Activated CD4-positive, alpha-beta T cell treated with anti-CD3 and anti-CD28 coated beads for 36 hours (primary cell): ENCODE measurements at regions of chr2 and their contacts with region 1.

Region 1: GRCh38 chr2:99489761-99490622 is at the start of gene REV1:
- DNase-seq: peak; percentile 97
- ATAC-seq: peak; percentile 89
- H3K4me3 Mint-ChIP-seq: peak within 1 kb of the TSS; percentile 89
- H3K27ac Mint-ChIP-seq: peak within 1 kb of the TSS; percentile 99
- H3K4me1 Mint-ChIP-seq: peaks cover 33% of the 10 kb centered on the region
- H3K27me3 Mint-ChIP-seq: no peaks in the 10 kb centered on the region
- total RNA-seq, gene REV1: 30.0 to 38.2 TPM

Region 2: DNA sequence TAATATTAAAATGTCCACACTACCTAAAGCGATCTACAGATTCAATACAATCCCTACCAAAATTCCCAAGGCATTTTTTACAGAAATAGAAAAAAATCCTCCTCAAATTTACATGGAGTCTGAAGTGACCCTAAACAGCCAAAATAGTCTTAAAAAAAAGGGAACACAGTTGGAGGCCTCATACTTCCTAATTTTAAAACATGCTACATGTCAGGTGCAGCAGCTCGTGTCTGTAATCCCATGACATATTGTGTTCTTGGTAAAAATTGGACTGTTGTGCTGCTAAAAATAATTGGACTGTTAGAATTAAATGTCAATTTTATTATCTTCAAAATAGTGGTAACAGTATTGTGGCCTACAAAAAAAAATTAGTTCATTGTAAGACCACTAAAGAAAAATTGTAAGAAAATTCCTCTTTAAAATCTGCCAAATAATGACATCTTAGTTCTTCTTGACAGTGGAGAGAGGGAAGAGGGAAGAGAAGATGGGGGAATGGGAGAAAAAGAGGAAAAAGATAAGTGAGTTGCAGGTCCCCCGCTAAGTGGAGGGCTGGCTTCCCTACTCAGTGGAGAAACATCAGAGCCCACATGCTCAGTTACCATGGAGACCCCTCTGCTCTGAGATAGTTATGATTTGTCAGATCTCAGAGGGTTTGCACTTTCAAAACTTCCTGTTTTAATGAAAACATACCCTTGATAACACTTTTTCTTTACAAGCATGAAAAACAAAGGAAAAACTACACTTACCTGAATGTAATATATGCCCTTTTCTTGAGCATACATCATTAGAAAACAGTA is 835.1 kb before region 1 on chr2:
- CTCF ChIA-PET with region 1: no interaction called
- POLR2A ChIA-PET with region 1: no interaction called
- intact Hi-C with region 1: loop called in 1 of 2 experiments (anchors 10 kb)
- DNase-seq: peak; percentile 48
- ATAC-seq: peak; percentile 38
- H3K4me3 Mint-ChIP-seq: peak overlapping the region; percentile 42
- H3K27ac Mint-ChIP-seq: peak overlapping the region; percentile 72
- H3K4me1 Mint-ChIP-seq: peaks cover 80% of the 10 kb centered on the region
- H3K27me3 Mint-ChIP-seq: no peaks in the 10 kb centered on the region

Region 3: DNA sequence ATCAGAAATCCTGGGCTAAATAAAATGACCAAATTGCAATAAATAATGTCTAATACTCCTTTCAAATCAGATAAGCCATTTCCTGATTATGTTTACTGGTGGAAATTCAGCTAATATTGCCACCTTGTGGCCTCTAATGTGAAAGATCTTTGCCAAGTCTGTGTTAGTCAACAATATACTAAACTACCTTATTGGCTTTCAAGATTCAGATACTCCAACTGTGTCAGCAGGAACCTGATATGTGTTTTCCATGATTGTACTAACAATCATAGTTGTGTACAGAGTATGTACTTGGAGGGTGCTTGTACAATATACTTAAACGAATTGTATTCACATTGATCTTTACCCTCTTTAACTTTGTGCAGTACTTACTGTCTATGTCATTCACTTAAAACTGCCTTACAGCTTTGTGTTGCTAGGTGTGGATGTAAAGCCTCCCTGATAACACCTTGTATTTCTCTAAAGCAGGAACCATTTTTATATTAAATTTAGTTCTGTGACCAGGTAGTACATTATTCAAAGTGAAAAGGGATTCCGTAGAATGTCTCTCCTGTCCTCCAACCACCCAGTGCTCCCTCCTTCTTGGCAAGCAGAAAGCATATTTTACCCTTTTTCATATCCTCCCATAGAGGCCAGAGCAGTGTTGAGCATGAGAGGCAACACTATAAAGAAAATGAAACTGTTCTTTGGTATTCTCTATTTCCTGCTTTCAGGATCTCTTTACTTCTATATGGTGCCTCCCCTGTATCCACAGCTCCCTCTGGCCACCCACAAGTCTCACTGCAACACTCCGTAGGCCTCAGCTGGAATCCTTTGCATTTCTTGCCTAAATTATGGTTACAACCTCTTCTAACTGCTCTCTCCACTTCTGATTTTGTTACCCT is 423.7 kb before region 1 on chr2:
- CTCF ChIA-PET with region 1: no interaction called
- POLR2A ChIA-PET with region 1: no interaction called
- intact Hi-C with region 1: loop called in 1 of 2 experiments (anchors 5 kb)
- DNase-seq: peak; percentile 46
- ATAC-seq: peak; percentile 98
- H3K4me3 Mint-ChIP-seq: no peak overlapping the region
- H3K27ac Mint-ChIP-seq: no peak overlapping the region
- H3K4me1 Mint-ChIP-seq: no peaks in the 10 kb centered on the region
- H3K27me3 Mint-ChIP-seq: no peaks in the 10 kb centered on the region

Region 4: GRCh38 chr2:99085421-99085820 is 404.6 kb before region 1 on chr2:
- CTCF ChIA-PET with region 1: no interaction called
- POLR2A ChIA-PET with region 1: no interaction called
- intact Hi-C with region 1: loop called in 1 of 2 experiments (anchors 1 kb)
- DNase-seq: peak; percentile 40
- ATAC-seq: no peak
- H3K4me3 Mint-ChIP-seq: no peak overlapping the region
- H3K27ac Mint-ChIP-seq: no peak overlapping the region
- H3K4me1 Mint-ChIP-seq: peaks cover 4% of the 10 kb centered on the region
- H3K27me3 Mint-ChIP-seq: peaks cover 8% of the 10 kb centered on the region

Region 5: GRCh38 chr2:99141110-99142108 is 348.6 kb before region 1 on chr2 and contains the start of gene C2orf15:
- CTCF ChIA-PET with region 1: no interaction called
- POLR2A ChIA-PET with region 1: no interaction called
- intact Hi-C with region 1: loop called in 1 of 2 experiments (anchors 1 kb)
- DNase-seq: peak; percentile 98
- ATAC-seq: peak; percentile 95
- H3K4me3 Mint-ChIP-seq: peak within 1 kb of the TSS; percentile 94
- H3K27ac Mint-ChIP-seq: peak within 1 kb of the TSS; percentile 86
- H3K4me1 Mint-ChIP-seq: peaks cover 16% of the 10 kb centered on the region
- H3K27me3 Mint-ChIP-seq: no peaks in the 10 kb centered on the region
- total RNA-seq, gene C2orf15: 0.87 to 1.1 TPM

Region 6: DNA sequence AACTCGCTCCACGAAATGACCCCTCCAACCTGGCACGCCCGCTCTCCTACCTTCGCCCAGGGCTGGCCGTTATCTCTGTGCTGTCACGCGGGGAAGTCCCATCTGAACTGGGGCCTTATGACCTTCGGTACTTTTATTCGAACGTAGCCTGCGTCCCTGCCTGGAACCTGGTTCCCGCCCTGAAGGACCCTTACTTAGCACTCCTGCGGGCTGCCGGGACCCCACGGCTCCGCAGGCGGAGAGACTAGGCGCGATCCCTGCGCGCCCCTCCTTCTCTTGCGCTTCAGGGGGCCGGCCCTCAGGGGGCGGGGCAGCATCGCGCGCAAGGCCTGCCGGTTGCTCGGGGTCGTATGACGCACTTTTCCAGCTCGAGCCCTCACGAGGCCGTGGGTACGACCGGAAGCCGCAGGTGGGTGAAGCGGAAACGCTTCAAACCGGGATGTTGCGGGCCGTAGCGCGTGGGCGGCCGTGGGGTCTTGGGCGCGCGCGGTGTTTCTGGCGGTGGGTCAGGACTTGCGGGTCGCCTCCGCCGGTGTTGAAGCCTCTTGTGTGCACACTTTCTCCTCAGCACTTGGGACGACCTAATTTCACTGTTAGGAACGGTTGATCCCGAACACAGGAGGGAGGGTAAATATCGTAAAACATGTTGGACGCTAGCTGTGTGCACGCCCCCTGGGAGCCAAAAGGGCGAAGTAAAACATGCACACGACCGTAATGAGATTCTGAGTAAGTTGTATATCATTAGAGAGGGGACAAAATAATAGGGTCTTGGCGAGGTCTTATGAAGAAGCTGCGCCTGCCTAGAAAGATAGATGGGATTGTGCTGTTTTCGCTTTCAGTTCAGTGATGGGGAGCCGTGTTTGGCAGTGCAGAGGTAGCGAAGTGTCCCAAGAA is 335.1 kb before region 1 on chr2 and contains the starts of genes LIPT1 and TSGA10:
- CTCF ChIA-PET with region 1: interaction called, 4 read pairs
- POLR2A ChIA-PET with region 1: no interaction called
- intact Hi-C with region 1: loop called (anchors 1 to 10 kb)
- DNase-seq: peak; percentile 96
- ATAC-seq: peak; percentile 94
- H3K4me3 Mint-ChIP-seq: no peak within 1 kb of the TSS
- H3K27ac Mint-ChIP-seq: peak within 1 kb of the TSS; percentile 93
- H3K4me1 Mint-ChIP-seq: peaks cover 36% of the 10 kb centered on the region
- H3K27me3 Mint-ChIP-seq: no peaks in the 10 kb centered on the region
- total RNA-seq, gene LIPT1: 4.6 to 4.7 TPM
- total RNA-seq, gene TSGA10: 6.4 to 9.4 TPM

Region 7: GRCh38 chr2:99462084-99462483 is 27.9 kb before region 1 on chr2:
- CTCF ChIA-PET with region 1: no interaction called
- POLR2A ChIA-PET with region 1: no interaction called
- intact Hi-C with region 1: no loop called
- DNase-seq: no peak
- ATAC-seq: no peak
- H3K4me3 Mint-ChIP-seq: no peak overlapping the region
- H3K27ac Mint-ChIP-seq: no peak overlapping the region
- H3K4me1 Mint-ChIP-seq: peaks cover 4% of the 10 kb centered on the region
- H3K27me3 Mint-ChIP-seq: no peaks in the 10 kb centered on the region

Region 8: DNA sequence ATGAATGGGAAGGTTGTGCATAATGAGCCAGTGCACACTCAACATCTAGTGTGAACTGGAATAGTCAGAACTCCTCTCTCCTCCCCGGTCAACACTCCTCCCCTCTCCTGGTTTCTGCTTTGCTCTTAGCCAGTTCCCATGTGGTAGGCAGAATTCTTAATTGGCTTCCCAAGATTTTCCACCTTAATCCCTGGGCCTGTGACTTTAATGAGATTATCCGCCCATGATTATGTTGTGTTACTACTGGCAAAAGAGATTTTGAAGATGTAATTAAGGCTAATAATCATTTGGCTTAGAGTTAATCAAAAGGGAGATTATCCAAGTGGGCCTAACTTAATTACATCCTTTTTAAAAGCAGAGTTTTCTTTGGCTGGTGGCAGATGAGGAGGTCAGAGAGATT is 34.1 kb after region 1 on chr2:
- CTCF ChIA-PET with region 1: no interaction called
- POLR2A ChIA-PET with region 1: no interaction called
- intact Hi-C with region 1: no loop called
- DNase-seq: no peak
- ATAC-seq: no peak
- H3K4me3 Mint-ChIP-seq: no peak overlapping the region
- H3K27ac Mint-ChIP-seq: no peak overlapping the region
- H3K4me1 Mint-ChIP-seq: no peaks in the 10 kb centered on the region
- H3K27me3 Mint-ChIP-seq: no peaks in the 10 kb centered on the region

Region 9: GRCh38 chr2:99648178-99648844 is 158.3 kb after region 1 on chr2:
- CTCF ChIA-PET with region 1: no interaction called
- POLR2A ChIA-PET with region 1: no interaction called
- intact Hi-C with region 1: no loop called
- DNase-seq: no peak
- ATAC-seq: no peak
- H3K4me3 Mint-ChIP-seq: no peak overlapping the region
- H3K27ac Mint-ChIP-seq: no peak overlapping the region
- H3K4me1 Mint-ChIP-seq: no peaks in the 10 kb centered on the region
- H3K27me3 Mint-ChIP-seq: no peaks in the 10 kb centered on the region